ENCODE measurements at regions of chr12 and their contacts with region 1.

Region 1: GRCh38 chr12:96208801-96209549 is 14.8 kb downstream of the ELK3 start:
- DNase-seq: no peak
- CTCF ChIP-seq: no peak

Region 2: DNA sequence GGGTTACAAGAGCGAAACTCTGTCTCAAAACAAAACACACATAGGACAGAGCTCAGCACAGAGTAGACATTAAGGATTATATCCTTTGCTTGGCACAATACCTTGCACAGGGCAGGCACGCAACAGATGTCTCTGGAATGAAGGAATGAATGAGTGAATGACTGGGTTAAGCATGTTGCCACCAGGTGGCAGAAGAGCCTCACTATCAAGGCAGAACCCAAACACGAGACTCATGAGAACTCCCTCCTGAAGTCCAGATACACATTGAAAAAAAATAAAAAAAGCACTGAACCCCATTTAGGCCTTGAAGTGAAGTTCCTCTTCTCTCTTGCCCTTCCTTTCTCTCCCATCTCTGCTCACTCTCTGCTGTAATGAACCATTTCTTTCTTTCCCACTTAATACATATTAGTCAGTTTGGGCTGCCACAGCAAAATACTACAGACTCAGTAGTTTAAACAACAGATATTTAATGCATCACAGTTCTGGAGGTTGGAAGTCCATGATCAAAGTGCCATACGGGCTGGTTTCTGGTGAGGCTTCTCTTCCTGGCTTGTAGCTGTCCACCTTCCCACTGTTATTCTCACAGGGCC is 147.0 kb before region 1 on chr12:
- CTCF ChIA-PET with region 1: interaction called, 123 read pairs
- POLR2A ChIA-PET with region 1: no interaction called
- DNase-seq: peak; percentile 74
- CTCF ChIP-seq: peak; percentile 73

Region 3: DNA sequence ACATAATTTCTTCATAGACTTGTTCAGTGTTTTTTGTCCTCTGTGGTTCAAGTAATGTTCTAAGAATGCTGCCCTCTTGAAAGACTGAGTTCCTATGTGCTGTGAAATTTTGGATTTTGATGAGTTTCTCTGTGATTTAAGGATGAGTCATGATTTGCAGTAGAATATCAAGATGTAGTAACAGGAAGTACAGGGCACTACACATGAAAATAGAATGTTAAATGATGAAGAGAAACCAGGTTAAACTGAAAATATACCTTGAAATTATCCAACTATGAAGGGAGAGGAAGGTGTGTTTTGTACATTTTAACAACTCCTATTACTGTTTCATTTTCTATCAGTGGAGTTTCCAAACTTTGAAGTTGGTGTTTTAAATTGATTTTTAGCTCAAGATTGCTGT is 10.0 kb before region 1 on chr12:
- CTCF ChIA-PET with region 1: interaction called, 13 read pairs
- POLR2A ChIA-PET with region 1: no interaction called
- DNase-seq: no peak
- CTCF ChIP-seq: no peak